Activated CD4-positive, alpha-beta T cell treated with anti-CD3 and anti-CD28 coated beads for 36 hours (primary cell): ENCODE measurements at regions of chr20 and their contacts with region 1.

Region 1: GRCh38 chr20:5822569-5822968 is 72.4 kb downstream of the SHLD1 start:
- DNase-seq: no peak
- ATAC-seq: no peak
- H3K4me3 Mint-ChIP-seq: no peak overlapping the region
- H3K27ac Mint-ChIP-seq: no peak overlapping the region
- H3K4me1 Mint-ChIP-seq: peaks cover 17% of the 10 kb centered on the region
- H3K27me3 Mint-ChIP-seq: no peaks in the 10 kb centered on the region

Region 2: GRCh38 chr20:5835321-5835821 is 12.8 kb after region 1 on chr20:
- CTCF ChIA-PET with region 1: interaction called, 10 read pairs
- POLR2A ChIA-PET with region 1: no interaction called
- intact Hi-C with region 1: no loop called
- DNase-seq: peak; percentile 40
- ATAC-seq: peak; percentile 84
- H3K4me3 Mint-ChIP-seq: no peak overlapping the region
- H3K27ac Mint-ChIP-seq: peak overlapping the region; percentile 53
- H3K4me1 Mint-ChIP-seq: peaks cover 31% of the 10 kb centered on the region
- H3K27me3 Mint-ChIP-seq: no peaks in the 10 kb centered on the region

Region 3: GRCh38 chr20:5864873-5865587 is 42.5 kb after region 1 on chr20:
- CTCF ChIA-PET with region 1: no interaction called
- POLR2A ChIA-PET with region 1: no interaction called
- intact Hi-C with region 1: no loop called
- DNase-seq: peak; percentile 38
- ATAC-seq: no peak
- H3K4me3 Mint-ChIP-seq: no peak overlapping the region
- H3K27ac Mint-ChIP-seq: no peak overlapping the region
- H3K4me1 Mint-ChIP-seq: peaks cover 19% of the 10 kb centered on the region
- H3K27me3 Mint-ChIP-seq: no peaks in the 10 kb centered on the region

Region 4: GRCh38 chr20:6026051-6026450 is 203.5 kb after region 1 on chr20:
- CTCF ChIA-PET with region 1: no interaction called
- POLR2A ChIA-PET with region 1: no interaction called
- intact Hi-C with region 1: no loop called
- DNase-seq: peak; percentile 42
- ATAC-seq: peak; percentile 90
- H3K4me3 Mint-ChIP-seq: no peak overlapping the region
- H3K27ac Mint-ChIP-seq: no peak overlapping the region
- H3K4me1 Mint-ChIP-seq: peaks cover 37% of the 10 kb centered on the region
- H3K27me3 Mint-ChIP-seq: no peaks in the 10 kb centered on the region